Tibial artery (tissue), 4 donors: ENCODE measurements at regions of chr2 and their contacts with region 1.

Region 1: DNA sequence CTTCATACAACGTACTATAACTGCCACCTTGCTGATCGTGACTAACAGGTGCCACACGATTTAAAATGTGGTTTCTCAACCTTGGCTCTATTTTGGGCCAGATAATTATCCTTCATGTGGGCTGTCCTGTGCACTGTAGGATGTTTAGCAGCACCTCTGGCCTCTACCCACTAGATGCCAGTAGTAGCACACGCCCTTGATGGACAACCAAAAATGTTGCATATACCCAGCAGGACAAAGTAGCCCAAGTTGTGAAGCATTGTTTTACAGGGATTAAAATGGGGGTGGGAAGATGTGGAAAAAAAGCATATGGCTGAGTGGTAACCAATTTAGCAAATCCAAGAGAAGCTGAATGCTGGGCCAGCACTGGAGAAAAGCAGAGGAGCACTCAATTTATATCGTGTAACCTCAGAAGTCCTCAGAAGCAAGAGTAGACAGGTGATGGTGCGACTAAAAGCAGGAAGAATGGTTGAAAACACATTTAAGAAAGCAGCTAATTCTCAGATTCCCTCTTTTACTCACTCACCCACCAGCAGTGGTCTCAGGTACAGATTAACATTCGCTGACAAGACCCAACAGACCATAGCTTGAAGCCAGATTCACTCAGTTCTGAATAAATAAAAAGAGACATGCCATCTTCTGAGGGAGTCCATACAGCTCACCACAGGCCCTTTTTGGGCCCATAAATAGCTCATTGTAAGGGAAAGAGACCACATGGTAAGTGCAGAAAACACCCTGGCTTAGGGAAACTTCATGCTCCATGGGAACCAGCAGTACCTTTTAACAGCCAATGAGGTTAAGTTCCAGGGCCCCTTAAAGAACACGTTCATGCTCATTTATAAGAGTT is 50.6 kb downstream of the RAPH1 start:
- DNase-seq: peak in 1 of 2 donors; percentile 30
- H3K4me3 ChIP-seq: no peak overlapping the region
- H3K27ac ChIP-seq: no peak overlapping the region
- H3K4me1 ChIP-seq: peaks cover 0 to 10% (median 0%) of the 10 kb centered on the region in 4 donors
- H3K27me3 ChIP-seq: no peaks in the 10 kb centered on the region
- CTCF ChIP-seq: peak; percentile 78 to 83

Region 2: DNA sequence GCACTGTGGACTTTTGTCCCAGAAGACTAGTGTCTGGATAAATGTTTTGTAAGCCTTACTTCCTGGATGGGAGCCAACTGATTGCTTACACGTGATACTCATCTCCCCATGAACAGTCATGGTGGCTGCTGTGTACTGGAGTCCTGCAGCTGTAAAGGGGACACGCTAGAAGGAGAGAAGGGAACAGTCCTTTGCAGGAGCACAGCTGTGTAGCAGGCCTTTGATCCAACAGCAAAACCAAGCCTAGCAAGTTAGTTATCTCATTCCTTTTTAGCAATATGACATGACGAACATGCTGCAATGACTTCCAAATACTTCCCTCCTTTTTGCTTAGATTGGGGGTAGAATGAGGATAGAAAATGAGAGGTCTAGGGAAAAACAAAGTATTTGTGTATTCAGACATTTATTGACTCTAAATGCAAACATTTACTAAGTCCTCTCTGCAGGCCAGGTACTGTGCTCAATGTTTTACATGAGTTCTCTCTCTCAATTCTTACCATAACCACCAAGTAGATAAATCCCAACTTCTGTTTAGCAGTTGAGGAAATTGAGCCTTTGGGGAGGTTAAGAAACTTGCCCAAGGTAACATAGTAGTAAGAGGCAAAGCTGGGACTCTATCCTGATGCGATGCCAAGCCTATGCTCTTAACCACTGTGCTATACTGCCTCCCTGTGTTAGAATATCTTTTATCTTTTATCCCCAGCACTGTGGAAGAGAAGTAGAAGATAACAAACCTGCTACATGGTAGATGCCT is 166.5 kb after region 1 on chr2:
- intact Hi-C with region 1: loop called (anchors 5 kb)
- DNase-seq: no peak
- H3K4me3 ChIP-seq: no peak overlapping the region
- H3K27ac ChIP-seq: peak overlapping the region; percentile 44 to 53
- H3K4me1 ChIP-seq: peaks cover 0 to 35% (median 25%) of the 10 kb centered on the region in 4 donors
- H3K27me3 ChIP-seq: no peaks in the 10 kb centered on the region
- CTCF ChIP-seq: peak; percentile 45 to 56

Region 3: DNA sequence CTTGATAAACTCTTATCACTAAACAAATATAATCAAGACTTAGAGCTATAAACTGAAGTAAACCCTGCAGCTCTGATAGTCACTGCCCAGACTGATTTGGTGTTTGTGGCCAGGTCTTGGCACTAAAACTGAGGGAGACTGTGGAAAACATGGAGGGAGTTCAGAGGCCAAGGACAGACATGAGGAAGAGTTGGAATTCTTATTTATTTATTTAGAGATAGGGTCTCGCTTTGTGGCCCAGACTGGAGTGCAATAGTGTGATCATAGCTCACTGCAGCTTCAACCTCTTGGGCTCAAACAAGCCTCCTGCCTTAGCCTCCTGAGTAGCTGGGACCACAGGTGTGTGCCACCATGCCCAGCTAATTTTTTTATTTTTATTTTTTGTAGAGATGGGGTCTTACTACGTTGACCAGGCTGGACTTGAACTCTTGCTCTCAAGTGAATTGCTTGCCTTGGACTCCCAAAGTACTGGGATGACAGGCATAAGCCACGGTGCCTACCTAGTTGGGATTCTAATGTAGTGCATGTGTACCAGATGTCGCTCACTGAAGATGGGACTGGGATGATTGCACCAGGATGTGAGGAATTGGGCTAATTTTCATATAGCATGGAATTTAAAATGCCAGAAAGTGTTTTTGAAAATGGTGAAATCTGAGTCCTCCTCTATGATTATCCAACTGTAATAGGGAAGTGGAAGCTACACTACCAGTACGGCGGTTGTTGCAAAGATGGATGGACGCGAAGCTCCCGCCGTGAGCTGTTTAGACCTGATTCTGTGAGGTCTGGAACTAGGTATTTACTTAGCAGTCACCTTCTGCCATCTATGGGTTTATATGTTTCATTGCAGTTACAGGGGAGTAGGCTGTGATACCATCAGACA is 330.4 kb after region 1 on chr2:
- intact Hi-C with region 1: loop called (anchors 5 kb)
- DNase-seq: peak in 1 of 2 donors; percentile 50
- H3K4me3 ChIP-seq: no peak overlapping the region
- H3K27ac ChIP-seq: no peak overlapping the region
- H3K4me1 ChIP-seq: peaks cover 0 to 29% (median 21%) of the 10 kb centered on the region in 4 donors
- H3K27me3 ChIP-seq: no peaks in the 10 kb centered on the region
- CTCF ChIP-seq: peak; percentile 85 to 88

Region 4: GRCh38 chr2:203830304-203831055 is 346.0 kb after region 1 on chr2:
- intact Hi-C with region 1: no loop called
- DNase-seq: no peak
- H3K4me3 ChIP-seq: no peak overlapping the region
- H3K27ac ChIP-seq: no peak overlapping the region
- H3K4me1 ChIP-seq: no peaks in the 10 kb centered on the region
- H3K27me3 ChIP-seq: no peaks in the 10 kb centered on the region
- CTCF ChIP-seq: no peak

Region 5: DNA sequence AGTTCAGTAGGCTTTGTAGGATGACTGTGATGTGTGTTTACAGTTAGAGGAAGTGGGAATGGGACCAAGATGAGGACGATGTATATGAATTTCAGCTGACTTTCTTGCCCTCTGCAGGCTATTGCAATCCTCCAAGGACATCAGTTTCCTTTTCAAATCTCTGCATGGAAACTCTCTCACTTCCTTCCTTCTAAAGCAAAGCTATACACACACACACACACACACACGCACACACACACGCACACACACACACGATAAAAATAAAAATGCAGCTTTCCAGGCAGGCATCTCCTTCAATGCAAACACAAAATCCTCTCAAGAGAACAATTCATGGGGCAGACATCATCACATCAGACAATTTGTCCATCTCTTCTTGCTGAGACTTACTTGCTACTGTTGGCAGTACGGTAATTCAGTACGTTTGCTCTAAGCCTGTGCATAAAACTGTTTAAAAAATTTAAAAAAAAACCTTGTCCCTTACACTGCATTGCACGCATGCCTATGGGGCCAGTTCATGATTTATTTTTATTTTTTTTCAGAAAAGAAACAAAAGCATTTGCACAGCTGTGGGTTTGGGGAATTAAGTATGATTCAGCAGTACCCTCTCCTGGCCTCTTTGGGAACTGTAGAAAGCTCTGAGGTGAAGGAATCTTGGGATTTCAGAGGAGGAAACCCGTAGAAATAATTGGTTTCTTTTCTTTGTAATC is 424.9 kb after region 1 on chr2:
- intact Hi-C with region 1: loop called (anchors 10 kb)
- DNase-seq: no peak
- H3K4me3 ChIP-seq: peak overlapping the region; percentile 26 to 32
- H3K27ac ChIP-seq: peak overlapping the region in 1 of 2 donors; percentile 18
- H3K4me1 ChIP-seq: peaks cover 0 to 30% (median 11%) of the 10 kb centered on the region in 4 donors
- H3K27me3 ChIP-seq: no peaks in the 10 kb centered on the region
- CTCF ChIP-seq: peak; percentile 80 to 82